Vagina (tissue), 2 donors: ENCODE measurements at regions of chr10 and their contacts with region 1.

Region 1: DNA sequence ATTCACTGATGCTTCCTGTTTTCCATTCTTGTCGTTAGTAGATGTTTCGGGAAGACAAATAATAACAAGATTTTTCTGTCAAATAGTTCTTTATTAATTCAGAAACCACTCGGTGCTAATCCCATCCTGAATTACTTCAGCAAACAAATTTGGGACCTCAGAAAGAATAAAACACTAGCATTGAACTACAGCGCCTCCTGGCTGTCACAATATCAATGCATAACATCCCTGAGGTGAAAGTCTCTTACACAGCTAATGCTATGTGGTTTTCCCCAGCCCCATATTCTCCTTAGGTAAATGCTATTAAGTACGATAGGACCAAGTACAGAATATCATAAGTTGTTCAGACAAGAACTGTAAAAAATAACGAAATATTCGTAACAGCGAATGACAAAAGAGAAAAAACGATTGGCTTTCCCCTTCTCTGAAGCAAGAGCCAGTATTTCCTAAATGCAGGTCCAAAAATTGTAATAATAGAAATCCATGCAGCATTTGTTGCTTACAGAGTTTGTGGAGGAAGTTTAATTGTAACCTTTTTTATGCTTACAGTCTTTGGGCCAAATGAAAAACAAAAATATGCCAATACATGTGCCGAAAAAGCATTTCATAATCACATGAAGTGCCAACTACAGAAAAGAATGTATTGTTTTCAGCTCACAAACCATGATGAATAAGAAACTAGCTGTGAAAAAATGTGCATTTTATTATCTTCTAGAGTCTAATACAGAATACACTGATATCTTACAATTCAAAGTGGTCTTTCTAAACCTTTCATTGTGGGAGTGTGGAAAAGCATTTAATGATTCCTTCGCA is 47.3 kb downstream of the MYPN start:
- DNase-seq: no peak
- H3K4me3 ChIP-seq: no peak overlapping the region
- H3K27ac ChIP-seq: no peak overlapping the region
- H3K4me1 ChIP-seq: peaks cover 13% of the 10 kb centered on the region
- H3K27me3 ChIP-seq: no peaks in the 10 kb centered on the region
- CTCF ChIP-seq: peak; percentile 71 to 76 (median 75)
- POLR2A ChIP-seq: no peak

Region 2: DNA sequence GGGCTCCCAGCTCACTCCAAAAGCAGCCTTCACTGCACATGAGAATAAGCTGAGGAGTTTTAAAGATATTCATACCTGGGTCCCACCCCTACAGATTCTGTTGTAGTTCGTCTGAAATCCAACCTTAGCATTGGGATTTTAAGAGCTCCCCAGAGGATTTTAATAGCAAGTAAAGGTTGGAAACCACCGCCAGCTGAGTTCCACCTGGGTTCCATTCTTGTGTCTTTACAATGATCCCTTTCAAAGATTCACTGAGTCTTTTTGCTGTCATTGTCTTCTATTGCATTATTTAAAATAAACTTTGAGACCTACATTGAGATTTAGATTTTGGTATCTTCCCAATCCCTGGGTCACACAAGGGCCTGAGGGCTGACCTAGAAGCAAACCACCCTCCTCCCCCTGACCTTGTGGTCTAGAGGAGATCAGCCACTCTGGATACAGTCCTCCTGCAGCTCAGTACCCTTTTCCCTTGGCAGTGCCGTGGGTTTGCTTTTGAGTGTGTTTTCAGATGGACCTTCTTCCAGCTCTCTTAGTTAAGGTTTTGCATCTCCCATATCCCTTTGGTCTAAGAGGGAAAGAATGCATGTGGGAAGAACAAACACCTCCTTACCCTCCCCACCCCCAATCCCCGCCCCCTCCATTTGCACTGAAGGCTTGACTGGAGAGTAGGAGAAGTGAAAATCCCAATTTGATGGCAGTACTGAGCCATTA is 294.7 kb before region 1 on chr10:
- intact Hi-C with region 1: loop called (anchors 5 kb)
- DNase-seq: no peak
- H3K4me3 ChIP-seq: no peak overlapping the region
- H3K27ac ChIP-seq: no peak overlapping the region
- H3K4me1 ChIP-seq: no peaks in the 10 kb centered on the region
- H3K27me3 ChIP-seq: no peaks in the 10 kb centered on the region
- CTCF ChIP-seq: no peak
- POLR2A ChIP-seq: no peak